Caco-2 (cell line): ENCODE measurements at regions of chr20 and their contacts with region 1.

Region 1: GRCh38 chr20:46013826-46014516 is 5.3 kb downstream of the MMP9 start:
- DNase-seq: peak; percentile 81 to 85
- H3K4me3 ChIP-seq: peak overlapping the region; percentile 16; the same call in 1 of the 2 replicates
- H3K4me3 Mint-ChIP-seq: peak overlapping the region; percentile 52
- H3K27ac Mint-ChIP-seq: no peak overlapping the region
- H3K4me1 ChIP-seq: peaks cover 8% of the 10 kb centered on the region
- H3K4me1 Mint-ChIP-seq: peaks cover 6% of the 10 kb centered on the region
- H3K27me3 ChIP-seq: no peaks in the 10 kb centered on the region; the same call in 1 of the 2 replicates
- H3K27me3 Mint-ChIP-seq: peaks cover 38% of the 10 kb centered on the region
- CTCF ChIP-seq: peak; percentile 71 to 94

Region 2: DNA sequence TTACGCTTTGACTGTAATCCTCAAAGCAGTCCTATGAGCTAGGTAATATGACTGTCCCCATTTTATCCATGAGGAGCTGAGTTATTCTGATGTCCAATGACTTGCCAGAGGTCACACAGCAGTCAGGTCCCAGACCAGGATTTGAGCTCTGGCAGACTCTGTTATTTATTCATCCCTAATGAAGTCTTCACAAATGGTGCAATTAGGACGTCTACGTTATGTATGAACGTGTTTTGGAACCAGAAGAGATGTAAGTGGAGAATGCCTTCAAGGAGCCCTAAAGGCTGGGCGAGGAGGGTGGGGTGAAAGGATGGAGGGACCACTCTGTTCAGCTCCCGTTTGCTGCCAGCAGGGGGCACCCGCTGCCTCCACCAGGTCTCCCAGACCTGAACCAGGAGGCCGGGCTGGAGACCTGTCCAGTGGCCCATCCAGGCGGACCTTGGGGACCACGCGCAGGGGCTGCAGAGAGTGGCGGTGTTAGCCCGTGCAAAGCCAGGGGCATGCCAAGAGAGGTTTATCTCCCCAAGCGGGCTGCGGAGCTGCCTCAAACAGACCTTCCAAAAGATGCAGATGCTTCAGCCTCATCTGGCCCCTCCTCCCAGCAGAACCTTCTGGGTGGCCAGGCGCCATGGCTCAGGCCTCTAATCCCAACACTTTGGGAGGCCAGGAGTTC is 26.7 kb before region 1 on chr20:
- CTCF ChIA-PET with region 1: interaction called, 14 read pairs
- POLR2A ChIA-PET with region 1: no interaction called
- intact Hi-C with region 1: loop called (anchors 2 kb)
- DNase-seq: peak; percentile 87 to 90
- H3K4me3 ChIP-seq: no peak overlapping the region
- H3K4me3 Mint-ChIP-seq: no peak overlapping the region
- H3K27ac Mint-ChIP-seq: no peak overlapping the region
- H3K4me1 ChIP-seq: peaks cover 8% of the 10 kb centered on the region
- H3K4me1 Mint-ChIP-seq: peaks cover 6% of the 10 kb centered on the region
- H3K27me3 ChIP-seq: no peaks in the 10 kb centered on the region
- H3K27me3 Mint-ChIP-seq: peaks cover 7% of the 10 kb centered on the region
- CTCF ChIP-seq: peak; percentile 94 to 95

Region 3: GRCh38 chr20:46051556-46052308 is 37.8 kb after region 1 on chr20:
- CTCF ChIA-PET with region 1: interaction called, 10 read pairs
- POLR2A ChIA-PET with region 1: no interaction called
- intact Hi-C with region 1: no loop called
- DNase-seq: no peak
- H3K4me3 ChIP-seq: no peak overlapping the region
- H3K4me3 Mint-ChIP-seq: no peak overlapping the region
- H3K27ac Mint-ChIP-seq: no peak overlapping the region
- H3K4me1 ChIP-seq: no peaks in the 10 kb centered on the region
- H3K4me1 Mint-ChIP-seq: no peaks in the 10 kb centered on the region
- H3K27me3 ChIP-seq: peaks cover 3% of the 10 kb centered on the region
- H3K27me3 Mint-ChIP-seq: peaks cover 13% of the 10 kb centered on the region
- CTCF ChIP-seq: no peak

Region 4: DNA sequence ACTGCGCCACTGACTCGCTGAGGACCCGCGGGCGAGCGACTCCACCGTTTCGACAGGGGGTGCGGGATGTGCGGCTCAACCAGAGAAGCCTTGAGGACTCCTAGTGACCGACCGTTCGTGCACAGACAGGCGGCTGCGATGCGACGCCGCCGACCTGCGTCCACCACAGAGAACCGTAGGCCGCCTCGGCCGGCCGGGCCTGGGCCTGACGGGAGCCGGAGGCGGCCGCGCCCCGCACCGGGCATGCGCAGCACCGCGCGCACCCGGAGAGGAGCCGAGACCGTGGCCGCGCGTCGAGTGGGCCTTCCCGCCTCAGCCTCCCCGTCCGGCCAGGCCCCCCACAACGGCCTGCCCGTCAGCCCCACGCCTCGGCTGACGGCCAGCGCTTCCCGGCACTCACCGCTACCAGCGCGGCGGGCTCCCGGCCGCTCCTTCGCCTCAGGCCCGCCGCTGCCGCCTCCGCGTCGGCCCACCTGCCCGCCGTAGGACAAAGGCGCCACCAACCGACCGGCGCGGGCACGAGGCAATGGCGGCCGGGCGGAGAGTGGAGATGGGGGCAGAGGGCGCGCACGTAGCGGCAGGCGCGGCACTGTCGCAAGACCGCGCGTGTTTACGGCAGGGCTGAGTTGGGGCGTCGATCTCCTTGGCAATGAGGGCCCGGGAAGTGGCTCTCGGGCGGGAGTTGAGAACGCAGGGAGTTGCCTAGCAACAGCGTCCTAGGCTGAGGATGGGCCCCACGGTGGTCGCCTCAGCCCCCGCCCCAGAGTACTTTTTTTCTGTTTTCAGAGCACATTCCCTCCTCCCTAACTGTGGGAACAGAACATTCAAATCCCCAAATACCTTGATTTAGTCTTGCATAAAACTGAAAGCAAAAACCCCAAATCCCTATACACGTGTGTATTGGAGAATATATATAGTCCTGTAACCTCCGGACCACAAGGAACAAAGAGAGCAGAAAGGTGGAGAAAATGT is 75.7 kb after region 1 on chr20 and contains the start of gene NCOA5:
- CTCF ChIA-PET with region 1: interaction called, 6 read pairs
- POLR2A ChIA-PET with region 1: no interaction called
- intact Hi-C with region 1: loop called (anchors 1 kb)
- DNase-seq: peak; percentile 99 to 100
- H3K4me3 ChIP-seq: peak within 1 kb of the TSS; percentile 94
- H3K4me3 Mint-ChIP-seq: peak within 1 kb of the TSS; percentile 83
- H3K27ac Mint-ChIP-seq: peak within 1 kb of the TSS; percentile 87
- H3K4me1 ChIP-seq: peaks cover 28% of the 10 kb centered on the region
- H3K4me1 Mint-ChIP-seq: peaks cover 36% of the 10 kb centered on the region
- H3K27me3 ChIP-seq: no peaks in the 10 kb centered on the region
- H3K27me3 Mint-ChIP-seq: peaks cover 3% of the 10 kb centered on the region
- CTCF ChIP-seq: peak; percentile 48 to 52
- total RNA-seq, gene NCOA5: 52.5 and 53.3 TPM in 2 replicates

Region 5: GRCh38 chr20:46349035-46349741 is 335.2 kb after region 1 on chr20:
- CTCF ChIA-PET with region 1: interaction called, 3 read pairs
- POLR2A ChIA-PET with region 1: no interaction called
- intact Hi-C with region 1: loop called (anchors 10 kb)
- DNase-seq: peak in 1 of 2 experiments; percentile 81
- H3K4me3 ChIP-seq: no peak overlapping the region
- H3K4me3 Mint-ChIP-seq: no peak overlapping the region
- H3K27ac Mint-ChIP-seq: no peak overlapping the region
- H3K4me1 ChIP-seq: peaks cover 17% of the 10 kb centered on the region
- H3K4me1 Mint-ChIP-seq: peaks cover 25% of the 10 kb centered on the region
- H3K27me3 ChIP-seq: no peaks in the 10 kb centered on the region; the same call in 1 of the 2 replicates
- H3K27me3 Mint-ChIP-seq: peaks cover 6% of the 10 kb centered on the region
- CTCF ChIP-seq: peak; percentile 91 to 92

Region 6: GRCh38 chr20:46438156-46438750 is 424.3 kb after region 1 on chr20:
- CTCF ChIA-PET with region 1: interaction called, 7 read pairs
- POLR2A ChIA-PET with region 1: no interaction called
- intact Hi-C with region 1: loop called (anchors 1 kb)
- DNase-seq: peak in 1 of 2 experiments; percentile 60
- H3K4me3 ChIP-seq: no peak overlapping the region
- H3K4me3 Mint-ChIP-seq: no peak overlapping the region
- H3K27ac Mint-ChIP-seq: no peak overlapping the region
- H3K4me1 ChIP-seq: no peaks in the 10 kb centered on the region
- H3K4me1 Mint-ChIP-seq: no peaks in the 10 kb centered on the region
- H3K27me3 ChIP-seq: no peaks in the 10 kb centered on the region; the same call in 1 of the 2 replicates
- H3K27me3 Mint-ChIP-seq: peaks cover 15% of the 10 kb centered on the region
- CTCF ChIP-seq: peak; percentile 32 to 61